ENCODE measurements at regions of chr9 and their contacts with region 1.

Region 1: GRCh38 chr9:27333241-27334052 is 36.5 kb upstream of the EQTN start:
- DNase-seq: peak; percentile 49
- ATAC-seq: peak; percentile 92

Region 2: DNA sequence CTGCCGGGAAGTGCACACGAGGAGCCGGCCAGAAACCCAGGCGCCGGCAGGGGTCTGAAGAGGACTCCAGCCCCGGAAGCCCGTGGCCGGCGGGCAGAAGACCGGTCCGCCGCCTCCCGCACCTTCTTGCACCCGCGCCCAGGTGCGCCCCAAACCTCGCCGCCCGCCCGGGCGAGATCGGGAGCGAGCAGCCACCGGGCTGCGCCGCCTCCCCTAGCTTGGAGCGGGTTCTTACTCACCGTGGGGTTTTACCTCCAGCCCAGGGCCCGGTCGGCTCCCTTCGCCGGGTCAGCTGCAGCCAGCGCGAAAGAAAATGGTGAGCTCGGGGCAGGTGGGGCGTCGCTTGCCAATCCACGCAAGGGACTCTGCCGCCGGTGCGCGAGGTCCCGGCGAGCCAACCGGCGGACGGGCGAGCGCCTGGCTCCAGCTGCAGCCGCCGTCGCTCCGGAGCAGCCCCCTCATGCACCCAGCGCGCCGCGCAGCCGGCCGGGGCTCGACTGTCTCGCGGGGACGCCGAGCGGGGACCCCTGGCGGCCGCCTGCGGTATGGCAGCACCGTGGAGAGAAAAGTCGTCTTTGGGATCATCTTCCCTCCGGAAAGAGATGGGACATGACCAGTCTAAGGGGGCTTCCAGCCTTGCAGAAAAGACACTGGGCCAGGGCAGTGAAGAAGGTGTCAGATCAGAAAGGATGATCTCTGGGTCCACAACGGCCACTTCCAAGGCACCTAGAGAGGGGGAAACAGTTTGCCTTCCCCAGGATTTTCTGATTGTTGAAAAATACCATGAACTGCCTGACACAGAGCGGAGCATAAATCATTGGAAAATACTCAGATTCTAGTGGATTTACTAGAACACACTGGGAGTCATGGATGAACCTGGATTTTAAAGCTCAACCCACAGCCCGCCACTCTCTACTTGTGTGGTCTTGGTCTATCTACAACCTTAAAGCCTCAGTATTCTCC is 196.2 kb after region 1 on chr9 and contains the start of gene MOB3B:
- intact Hi-C with region 1: loop called (anchors 1 to 5 kb)
- DNase-seq: peak; percentile 88
- ATAC-seq: peak; percentile 92 to 94
- total RNA-seq, gene MOB3B: 1.2 to 1.6 TPM

Region 3: GRCh38 chr9:27548055-27548741 is 214.8 kb after region 1 on chr9:
- intact Hi-C with region 1: loop called (anchors 1 to 5 kb)
- DNase-seq: no peak
- ATAC-seq: peak; percentile 73 to 82

Measured in left cardiac atrium (tissue), 4 donors.